GM13977 (cell line): ENCODE measurements at regions of chr19 and their contacts with region 1.

Region 1: GRCh38 chr19:54851353-54851752 is 1.1 kb downstream of the KIR3DL2 start:
- DNase-seq: no peak
- CTCF ChIP-seq: no peak

Region 2: DNA sequence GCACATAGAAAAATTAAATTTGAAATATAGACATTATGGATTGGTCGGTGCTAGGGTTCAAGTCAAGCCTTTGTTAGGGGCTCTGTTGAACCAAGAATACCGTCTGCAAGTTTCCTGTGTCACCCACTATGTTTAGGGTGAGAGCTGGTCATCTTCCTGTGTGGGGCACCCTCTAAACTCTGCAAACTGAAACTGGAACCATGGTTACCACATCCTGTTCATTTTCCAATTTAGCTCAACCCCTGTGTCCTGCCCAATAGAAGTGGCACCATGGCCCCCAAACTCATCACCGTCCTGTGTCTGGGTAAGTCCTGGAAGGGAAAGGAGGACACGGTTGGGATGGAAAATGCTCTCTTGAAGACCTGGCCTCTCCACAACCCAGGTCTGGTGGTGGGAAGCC is 318.8 kb before region 1 on chr19:
- in situ Hi-C with region 1: no loop called
- DNase-seq: peak; percentile 40
- CTCF ChIP-seq: no peak

Region 3: GRCh38 chr19:54817670-54818536 is 33.5 kb before region 1 on chr19:
- in situ Hi-C with region 1: loop called (anchors 5 kb)
- DNase-seq: no peak
- CTCF ChIP-seq: no peak

Region 4: DNA sequence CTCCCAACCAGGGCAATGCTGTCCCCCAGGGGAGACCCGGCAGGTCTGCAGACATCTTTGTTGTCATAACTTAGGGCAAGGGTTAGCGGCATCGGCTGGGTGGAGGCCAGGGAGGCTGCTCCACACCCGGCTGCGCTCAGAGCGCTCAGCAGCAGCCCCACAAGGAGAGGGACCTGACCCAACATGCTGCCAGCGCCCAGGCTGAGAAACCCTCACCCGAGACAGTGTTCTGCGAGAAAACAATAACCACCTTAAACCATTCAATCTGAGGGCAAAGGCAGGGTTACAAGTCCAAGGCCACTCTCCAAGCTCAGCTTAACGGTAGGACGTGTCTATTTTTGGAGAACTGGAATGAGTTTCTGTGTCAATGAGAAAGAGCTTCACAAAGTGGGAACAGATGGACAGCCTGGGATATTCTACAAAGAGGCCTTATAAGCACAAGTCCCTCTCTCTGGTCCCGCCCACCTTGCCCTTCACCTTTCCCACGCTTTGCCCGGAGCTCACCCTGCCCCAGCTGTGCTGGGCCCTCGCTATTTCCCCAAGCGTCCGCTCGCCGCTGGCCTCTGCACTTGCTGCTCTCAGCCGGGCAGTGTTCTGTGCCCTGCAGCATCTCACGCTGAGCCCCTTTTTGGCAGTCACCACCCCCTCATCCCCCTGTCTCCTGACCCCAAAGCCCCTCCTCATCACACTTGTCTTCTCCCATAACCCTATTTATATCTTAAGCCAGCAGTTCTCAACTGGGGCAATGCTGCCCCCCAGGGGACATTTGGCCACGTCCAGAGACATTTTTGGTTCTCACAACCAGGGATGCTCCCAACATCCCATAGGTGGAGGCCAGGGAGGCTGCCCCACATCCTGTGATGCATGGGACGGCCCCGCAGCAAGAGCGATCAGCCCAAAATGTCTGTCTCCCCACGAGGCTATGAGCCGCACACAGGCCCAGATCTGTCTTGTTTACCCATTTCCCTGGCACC is 248.5 kb after region 1 on chr19:
- in situ Hi-C with region 1: no loop called
- DNase-seq: no peak
- CTCF ChIP-seq: peak; percentile 26